ENCODE measurements at regions of chr2 and their contacts with region 1.

Region 1: GRCh38 chr2:149329489-149330125 is 780 bp upstream of the LYPD6 start:
- DNase-seq: no peak
- H3K4me3 Mint-ChIP-seq: peak overlapping the region; percentile 45
- H3K27ac Mint-ChIP-seq: no peak overlapping the region
- H3K4me1 Mint-ChIP-seq: peaks cover 6% of the 10 kb centered on the region
- H3K27me3 Mint-ChIP-seq: peaks cover 43% of the 10 kb centered on the region

Region 2: GRCh38 chr2:149313512-149313972 is 16.1 kb before region 1 on chr2:
- CTCF ChIA-PET with region 1: interaction called, 12 read pairs
- POLR2A ChIA-PET with region 1: no interaction called
- intact Hi-C with region 1: no loop called
- DNase-seq: no peak
- H3K4me3 Mint-ChIP-seq: no peak overlapping the region
- H3K27ac Mint-ChIP-seq: no peak overlapping the region
- H3K4me1 Mint-ChIP-seq: peaks cover 3% of the 10 kb centered on the region
- H3K27me3 Mint-ChIP-seq: peaks cover 9% of the 10 kb centered on the region